Psoas muscle (tissue), 8 donors: ENCODE measurements at regions of chr7 and their contacts with region 1.

Region 1: GRCh38 chr7:31122649-31123058 is 70.5 kb downstream of the ADCYAP1R1 start:
- DNase-seq: peak; percentile 43 to 66
- ATAC-seq: peak; percentile 57 to 85 (median 68)
- H3K4me3 ChIP-seq: no peak overlapping the region
- H3K27ac ChIP-seq: no peak overlapping the region
- H3K4me1 ChIP-seq: no peaks in the 10 kb centered on the region
- H3K27me3 ChIP-seq: no peaks in the 10 kb centered on the region
- CTCF ChIP-seq: peak; percentile 82

Region 2: DNA sequence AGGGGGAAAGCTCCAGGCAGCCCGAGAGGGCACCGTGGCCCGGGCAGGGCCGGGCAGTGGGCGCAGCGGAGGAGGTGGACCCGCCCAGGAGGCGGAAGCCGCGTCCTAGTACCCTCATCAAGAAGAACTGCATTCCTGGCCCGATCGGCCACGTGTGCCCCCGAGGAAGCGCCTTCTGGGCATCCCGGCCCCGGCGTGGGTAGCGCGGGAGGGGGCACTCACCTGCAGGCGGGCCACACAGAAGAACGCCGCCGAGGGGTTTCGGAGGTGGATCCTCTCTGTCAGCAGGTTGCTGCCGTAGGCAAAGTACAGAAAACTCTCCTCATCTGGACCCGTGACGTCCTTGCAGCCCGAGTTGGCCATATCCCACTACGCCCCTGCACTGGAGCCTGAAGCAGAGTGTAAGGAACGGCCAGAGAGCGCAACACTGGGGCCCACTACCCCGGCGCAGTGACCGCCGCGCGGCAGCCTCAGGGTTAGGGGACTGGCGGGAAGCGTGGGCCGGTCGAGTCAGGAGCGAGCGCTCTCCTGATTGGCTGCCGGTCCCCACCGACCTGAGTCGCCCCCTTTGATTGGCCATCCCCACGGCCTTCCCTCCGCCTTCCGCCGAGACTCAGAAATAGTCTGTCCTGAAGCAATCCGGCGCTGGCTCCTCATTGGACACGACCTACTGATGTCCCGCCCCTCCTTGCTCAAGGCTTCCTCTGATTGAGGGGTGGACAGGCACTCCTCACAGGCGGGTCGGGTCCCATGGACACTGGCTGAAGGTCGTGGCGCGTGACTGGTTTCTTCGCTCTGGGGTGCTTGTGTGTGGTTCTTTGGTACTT is 618.1 kb before region 1 on chr7 and contains the start of gene GGCT:
- intact Hi-C with region 1: no loop called
- DNase-seq: peak; percentile 99
- ATAC-seq: peak; percentile 97 to 100 (median 100)
- H3K4me3 ChIP-seq: peak within 1 kb of the TSS; percentile 99
- H3K27ac ChIP-seq: peak within 1 kb of the TSS; percentile 88
- H3K4me1 ChIP-seq: peaks cover 6% of the 10 kb centered on the region
- H3K27me3 ChIP-seq: no peaks in the 10 kb centered on the region
- CTCF ChIP-seq: no peak
- total RNA-seq, gene GGCT: 16.2 to 20.6 (median 17.0) TPM

Region 3: GRCh38 chr7:30938435-30939316 is 184.0 kb before region 1 on chr7:
- intact Hi-C with region 1: loop called in 1 of 2 experiments (anchors 2 kb)
- DNase-seq: peak; percentile 77 to 88
- ATAC-seq: peak; percentile 80 to 87 (median 82)
- H3K4me3 ChIP-seq: no peak overlapping the region
- H3K27ac ChIP-seq: no peak overlapping the region
- H3K4me1 ChIP-seq: no peaks in the 10 kb centered on the region
- H3K27me3 ChIP-seq: peaks cover 0 to 6% (median 0%) of the 10 kb centered on the region in 3 donors
- CTCF ChIP-seq: peak; percentile 97

Region 4: GRCh38 chr7:31160941-31161340 is 38.3 kb after region 1 on chr7:
- intact Hi-C with region 1: no loop called
- DNase-seq: no peak
- ATAC-seq: no peak
- H3K4me3 ChIP-seq: no peak overlapping the region
- H3K27ac ChIP-seq: no peak overlapping the region
- H3K4me1 ChIP-seq: no peaks in the 10 kb centered on the region
- H3K27me3 ChIP-seq: peaks cover 0 to under 1% (median 0%) of the 10 kb centered on the region in 3 donors
- CTCF ChIP-seq: no peak

Region 5: GRCh38 chr7:31214751-31215150 is 92.1 kb after region 1 on chr7:
- intact Hi-C with region 1: no loop called
- DNase-seq: no peak
- ATAC-seq: no peak
- H3K4me3 ChIP-seq: no peak overlapping the region
- H3K27ac ChIP-seq: no peak overlapping the region
- H3K4me1 ChIP-seq: no peaks in the 10 kb centered on the region
- H3K27me3 ChIP-seq: no peaks in the 10 kb centered on the region
- CTCF ChIP-seq: no peak

Region 6: DNA sequence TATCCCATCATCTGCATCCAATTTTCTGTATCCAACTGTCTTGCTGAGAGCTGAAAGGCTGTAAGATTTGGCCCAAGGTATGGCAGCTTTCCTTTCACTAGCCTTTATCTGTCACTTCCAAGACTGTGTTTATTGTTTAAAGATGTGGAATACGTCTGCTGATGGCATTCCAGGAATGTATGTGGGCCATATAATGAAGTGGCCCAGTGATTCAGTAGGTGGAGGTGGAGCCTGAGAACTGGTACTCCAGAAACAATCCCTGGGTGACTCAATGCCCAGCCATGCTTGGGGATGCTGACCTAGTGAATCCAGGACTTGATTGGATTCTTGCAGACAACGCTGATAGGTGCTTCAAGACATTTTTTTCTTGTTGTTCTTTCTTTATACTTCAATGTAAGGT is 204.4 kb after region 1 on chr7:
- intact Hi-C with region 1: no loop called
- DNase-seq: no peak
- ATAC-seq: no peak
- H3K4me3 ChIP-seq: no peak overlapping the region
- H3K27ac ChIP-seq: no peak overlapping the region
- H3K4me1 ChIP-seq: no peaks in the 10 kb centered on the region
- H3K27me3 ChIP-seq: no peaks in the 10 kb centered on the region
- CTCF ChIP-seq: no peak